Caco-2 (cell line): ENCODE measurements at regions of chr3 and their contacts with region 1.

Region 1: DNA sequence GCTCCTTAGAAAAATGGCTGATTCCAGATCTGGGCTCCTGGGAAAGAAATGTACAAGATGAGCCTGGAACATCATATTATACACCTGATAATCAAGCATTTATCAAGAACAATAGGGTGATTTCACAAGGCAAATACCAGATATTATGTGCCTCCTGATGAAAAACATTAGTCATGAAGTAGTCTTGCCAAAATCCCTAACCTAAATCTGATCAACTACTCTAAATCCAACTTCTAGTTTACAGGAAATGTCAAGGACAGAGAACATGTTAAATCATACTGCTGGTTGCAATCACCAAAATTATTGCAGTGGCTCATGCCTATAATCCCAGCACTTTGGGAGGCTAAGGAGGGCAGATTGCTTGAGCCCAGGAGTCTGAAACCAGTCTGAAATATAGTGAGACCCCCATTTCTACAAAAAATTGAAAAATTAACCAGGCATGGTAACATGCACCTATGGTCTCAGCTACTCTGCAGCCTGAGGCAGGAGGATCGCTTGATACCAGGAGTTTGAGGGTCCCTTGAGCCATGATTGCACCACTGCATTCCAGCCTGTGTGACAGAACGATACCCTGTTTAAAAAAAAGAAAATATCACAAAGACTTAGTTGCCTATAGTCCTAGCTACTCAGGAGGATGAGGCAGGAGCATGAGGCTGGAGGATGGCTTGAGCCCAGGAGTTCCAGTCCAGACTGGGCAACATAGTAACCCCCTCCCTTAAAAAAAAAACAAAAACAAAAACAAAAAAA is 34.9 kb upstream of the ATP13A3 start:
- DNase-seq: no peak
- H3K4me3 ChIP-seq: peak overlapping the region; percentile 42
- H3K4me3 Mint-ChIP-seq: peak overlapping the region; percentile 71
- H3K27ac Mint-ChIP-seq: peak overlapping the region; percentile 98
- H3K4me1 ChIP-seq: peaks cover 52% of the 10 kb centered on the region
- H3K4me1 Mint-ChIP-seq: peaks cover 23% of the 10 kb centered on the region
- H3K27me3 ChIP-seq: no peaks in the 10 kb centered on the region
- H3K27me3 Mint-ChIP-seq: no peaks in the 10 kb centered on the region
- CTCF ChIP-seq: no peak

Region 2: DNA sequence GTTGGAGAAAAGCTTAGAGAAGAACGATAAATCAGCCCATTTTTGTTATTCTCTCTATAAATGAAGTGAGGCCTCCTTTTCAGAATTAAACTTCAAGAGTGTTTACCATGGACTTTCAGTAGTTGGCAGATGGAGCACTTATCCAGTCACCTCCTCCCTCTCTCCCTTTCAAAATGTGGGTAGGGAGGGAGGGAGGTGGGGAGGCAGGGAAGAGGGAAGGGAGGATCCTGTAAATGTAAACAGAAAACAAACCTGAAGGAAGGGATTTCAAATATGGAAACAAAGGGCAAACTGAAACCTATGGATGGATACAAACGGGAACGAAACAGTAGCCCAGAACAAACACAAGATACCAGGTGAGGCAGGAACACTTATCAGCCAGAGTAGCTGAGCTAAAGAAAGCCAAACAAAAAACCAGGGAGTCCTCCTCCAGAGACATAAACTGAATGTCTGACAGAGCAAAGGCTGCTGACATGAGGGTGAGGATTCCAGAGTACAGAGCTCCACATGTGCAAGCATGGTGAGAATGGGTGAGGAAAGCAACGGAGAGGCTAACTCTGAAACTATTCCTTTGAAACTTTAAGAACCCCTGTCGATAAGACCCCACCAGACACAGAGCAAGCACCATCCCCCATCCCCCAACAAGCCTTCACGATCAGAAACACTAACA is 81.7 kb before region 1 on chr3:
- CTCF ChIA-PET with region 1: no interaction called
- POLR2A ChIA-PET with region 1: no interaction called
- intact Hi-C with region 1: loop called (anchors 2 kb)
- DNase-seq: peak in 1 of 2 experiments; percentile 27
- H3K4me3 ChIP-seq: no peak overlapping the region
- H3K4me3 Mint-ChIP-seq: peak overlapping the region; percentile 28
- H3K27ac Mint-ChIP-seq: peak overlapping the region; percentile 77
- H3K4me1 ChIP-seq: peaks cover 23% of the 10 kb centered on the region
- H3K4me1 Mint-ChIP-seq: peaks cover 32% of the 10 kb centered on the region
- H3K27me3 ChIP-seq: no peaks in the 10 kb centered on the region
- H3K27me3 Mint-ChIP-seq: no peaks in the 10 kb centered on the region
- CTCF ChIP-seq: no peak

Region 3: GRCh38 chr3:194486540-194487288 is 35.0 kb before region 1 on chr3 and contains the start of gene ATP13A3:
- CTCF ChIA-PET with region 1: no interaction called
- POLR2A ChIA-PET with region 1: interaction called, 4 read pairs
- intact Hi-C with region 1: loop called (anchors 1 kb)
- DNase-seq: peak; percentile 88 to 91
- H3K4me3 ChIP-seq: peak within 1 kb of the TSS; percentile 70
- H3K4me3 Mint-ChIP-seq: peak within 1 kb of the TSS; percentile 70
- H3K27ac Mint-ChIP-seq: peak within 1 kb of the TSS; percentile 77
- H3K4me1 ChIP-seq: peaks cover 37% of the 10 kb centered on the region
- H3K4me1 Mint-ChIP-seq: peaks cover 33% of the 10 kb centered on the region
- H3K27me3 ChIP-seq: no peaks in the 10 kb centered on the region
- H3K27me3 Mint-ChIP-seq: no peaks in the 10 kb centered on the region
- CTCF ChIP-seq: no peak
- total RNA-seq, gene ATP13A3: 181 and 183 TPM in 2 replicates

Region 4: GRCh38 chr3:194543550-194543949 is 21.9 kb after region 1 on chr3:
- CTCF ChIA-PET with region 1: no interaction called
- POLR2A ChIA-PET with region 1: no interaction called
- intact Hi-C with region 1: no loop called
- DNase-seq: no peak
- H3K4me3 ChIP-seq: no peak overlapping the region
- H3K4me3 Mint-ChIP-seq: no peak overlapping the region
- H3K27ac Mint-ChIP-seq: no peak overlapping the region
- H3K4me1 ChIP-seq: peaks cover 9% of the 10 kb centered on the region
- H3K4me1 Mint-ChIP-seq: peaks cover 10% of the 10 kb centered on the region
- H3K27me3 ChIP-seq: no peaks in the 10 kb centered on the region
- H3K27me3 Mint-ChIP-seq: no peaks in the 10 kb centered on the region
- CTCF ChIP-seq: no peak

Region 5: GRCh38 chr3:194565597-194566190 is 44.0 kb after region 1 on chr3:
- CTCF ChIA-PET with region 1: no interaction called
- POLR2A ChIA-PET with region 1: interaction called, 3 read pairs
- intact Hi-C with region 1: loop called (anchors 1 kb)
- DNase-seq: no peak
- H3K4me3 ChIP-seq: no peak overlapping the region
- H3K4me3 Mint-ChIP-seq: no peak overlapping the region
- H3K27ac Mint-ChIP-seq: no peak overlapping the region
- H3K4me1 ChIP-seq: peaks cover 44% of the 10 kb centered on the region
- H3K4me1 Mint-ChIP-seq: peaks cover 16% of the 10 kb centered on the region
- H3K27me3 ChIP-seq: no peaks in the 10 kb centered on the region
- H3K27me3 Mint-ChIP-seq: no peaks in the 10 kb centered on the region
- CTCF ChIP-seq: no peak

Region 6: GRCh38 chr3:194583604-194584318 is 62.1 kb after region 1 on chr3:
- CTCF ChIA-PET with region 1: interaction called, 4 read pairs
- POLR2A ChIA-PET with region 1: no interaction called
- intact Hi-C with region 1: loop called (anchors 1 kb)
- DNase-seq: peak; percentile 93 to 97
- H3K4me3 ChIP-seq: peak overlapping the region; percentile 75
- H3K4me3 Mint-ChIP-seq: peak overlapping the region; percentile 96
- H3K27ac Mint-ChIP-seq: peak overlapping the region; percentile 98
- H3K4me1 ChIP-seq: peaks cover 28% of the 10 kb centered on the region
- H3K4me1 Mint-ChIP-seq: peaks cover 15% of the 10 kb centered on the region
- H3K27me3 ChIP-seq: no peaks in the 10 kb centered on the region
- H3K27me3 Mint-ChIP-seq: no peaks in the 10 kb centered on the region
- CTCF ChIP-seq: no peak